ENCODE measurements at regions of chr19 and their contacts with region 1.

Region 1: DNA sequence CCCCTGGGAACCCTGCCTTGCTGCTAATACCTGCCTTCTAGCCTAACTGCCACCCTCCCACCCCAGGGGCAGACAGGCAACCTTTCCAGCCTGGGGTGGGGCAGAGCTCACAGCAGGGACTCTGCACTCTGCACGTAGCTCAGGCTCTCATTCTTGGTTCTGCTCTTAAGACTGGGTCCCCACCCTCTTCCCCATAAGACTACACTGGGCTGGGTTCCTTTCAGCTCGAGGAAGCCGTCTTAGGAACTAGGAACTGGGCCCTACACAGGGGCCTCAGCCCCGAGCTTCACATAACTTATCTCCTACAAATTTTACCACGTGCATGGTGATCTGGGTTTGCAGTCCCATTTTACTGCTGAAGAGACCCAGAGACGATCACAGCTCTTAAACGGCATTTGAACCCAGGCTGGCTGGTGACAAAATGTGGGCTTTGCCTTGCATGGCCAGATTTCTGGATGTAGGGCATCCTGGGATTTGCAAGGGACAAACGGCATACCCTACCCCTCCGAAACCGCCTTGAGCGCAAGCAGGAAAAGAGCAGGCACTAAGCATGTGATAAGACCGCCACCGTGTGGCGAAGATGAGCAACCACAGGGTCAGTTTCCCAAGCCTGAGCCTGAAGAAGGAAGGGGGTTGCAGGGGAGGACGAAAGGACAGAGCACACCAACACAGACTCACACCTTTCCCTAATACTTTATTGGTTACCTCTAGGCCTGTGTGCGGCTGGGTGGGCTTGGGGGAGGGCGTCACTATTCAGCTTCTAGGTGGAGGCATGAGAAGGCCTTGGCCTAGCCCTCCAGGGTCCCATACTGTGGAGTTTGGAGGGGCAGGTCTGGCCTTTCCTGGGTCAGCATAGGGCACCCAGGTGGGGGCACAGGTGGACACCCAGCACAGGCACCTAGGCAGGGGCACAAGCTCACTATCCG is 5.1 kb downstream of the JUNB start:
- DNase-seq: peak; percentile 69 to 76
- H3K4me3 ChIP-seq: peak overlapping the region; percentile 33; the same call in 1 of the 2 replicates
- H3K27ac ChIP-seq: peak overlapping the region; percentile 31
- H3K4me1 ChIP-seq: peaks cover 33% of the 10 kb centered on the region
- H3K27me3 ChIP-seq: no peaks in the 10 kb centered on the region
- CTCF ChIP-seq: peak; percentile 98

Region 2: GRCh38 chr19:12757544-12758274 is 38.7 kb before region 1 on chr19:
- CTCF ChIA-PET with region 1: interaction called, 9 read pairs
- POLR2A ChIA-PET with region 1: no interaction called
- intact Hi-C with region 1: loop called (anchors 1 kb)
- DNase-seq: peak; percentile 60 to 70
- H3K4me3 ChIP-seq: peak overlapping the region; percentile 37; the same call in 1 of the 2 replicates
- H3K27ac ChIP-seq: no peak overlapping the region
- H3K4me1 ChIP-seq: peaks cover 6% of the 10 kb centered on the region; the same call in 1 of the 2 replicates
- H3K27me3 ChIP-seq: peaks cover 6% of the 10 kb centered on the region; the same call in 1 of the 2 replicates
- CTCF ChIP-seq: peak; percentile 97

Region 3: DNA sequence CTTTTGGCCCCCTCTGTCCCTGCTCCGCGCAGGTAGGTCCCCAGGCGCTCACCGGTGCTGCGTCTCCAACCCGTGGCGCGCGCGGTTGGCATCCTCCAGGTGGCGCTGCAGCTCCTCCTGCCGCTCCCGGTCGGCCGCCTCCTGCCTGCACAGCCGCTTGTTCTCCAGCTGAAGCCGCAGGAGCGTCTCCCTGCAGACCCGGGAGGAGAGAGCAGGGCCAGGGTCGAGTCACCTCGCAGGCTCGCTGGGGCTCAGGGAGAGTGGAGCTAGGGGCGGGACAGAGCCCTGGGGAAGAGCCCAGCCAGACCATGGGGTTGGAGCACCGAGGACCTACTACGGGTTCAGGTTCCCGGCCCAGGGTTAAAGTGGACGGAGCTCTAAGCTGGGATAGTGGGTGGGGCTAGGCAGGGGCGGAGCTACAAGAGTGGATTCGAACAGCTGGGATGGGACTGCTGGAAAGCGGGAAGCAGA is 30.3 kb before region 1 on chr19:
- CTCF ChIA-PET with region 1: interaction called, 14 read pairs
- POLR2A ChIA-PET with region 1: interaction called, 38 read pairs
- intact Hi-C with region 1: loop called (anchors 2 kb)
- DNase-seq: peak; percentile 59 to 85
- H3K4me3 ChIP-seq: peak overlapping the region; percentile 25; the same call in 1 of the 2 replicates
- H3K27ac ChIP-seq: no peak overlapping the region
- H3K4me1 ChIP-seq: no peaks in the 10 kb centered on the region
- H3K27me3 ChIP-seq: no peaks in the 10 kb centered on the region
- CTCF ChIP-seq: peak; percentile 85

Region 4: GRCh38 chr19:12777217-12778016 is 19.0 kb before region 1 on chr19:
- CTCF ChIA-PET with region 1: interaction called, 20 read pairs
- POLR2A ChIA-PET with region 1: interaction called, 59 read pairs
- intact Hi-C with region 1: loop called (anchors 1 kb)
- DNase-seq: peak; percentile 63 to 85
- H3K4me3 ChIP-seq: peak overlapping the region; percentile 59
- H3K27ac ChIP-seq: peak overlapping the region; percentile 51
- H3K4me1 ChIP-seq: peaks cover 54% of the 10 kb centered on the region
- H3K27me3 ChIP-seq: no peaks in the 10 kb centered on the region
- CTCF ChIP-seq: peak; percentile 99

Region 5: GRCh38 chr19:12821761-12822160 is 25.4 kb after region 1 on chr19:
- CTCF ChIA-PET with region 1: interaction called, 16 read pairs
- POLR2A ChIA-PET with region 1: no interaction called
- intact Hi-C with region 1: no loop called
- DNase-seq: no peak
- H3K4me3 ChIP-seq: no peak overlapping the region
- H3K27ac ChIP-seq: no peak overlapping the region
- H3K4me1 ChIP-seq: no peaks in the 10 kb centered on the region
- H3K27me3 ChIP-seq: no peaks in the 10 kb centered on the region
- CTCF ChIP-seq: no peak

Region 6: GRCh38 chr19:12840091-12841079 is 44.0 kb after region 1 on chr19:
- CTCF ChIA-PET with region 1: interaction called, 7 read pairs
- POLR2A ChIA-PET with region 1: interaction called, 20 read pairs
- intact Hi-C with region 1: no loop called
- DNase-seq: peak; percentile 85 to 97
- H3K4me3 ChIP-seq: peak overlapping the region; percentile 49; the same call in 1 of the 2 replicates
- H3K27ac ChIP-seq: no peak overlapping the region
- H3K4me1 ChIP-seq: peaks cover 13% of the 10 kb centered on the region
- H3K27me3 ChIP-seq: no peaks in the 10 kb centered on the region
- CTCF ChIP-seq: no peak

Region 7: DNA sequence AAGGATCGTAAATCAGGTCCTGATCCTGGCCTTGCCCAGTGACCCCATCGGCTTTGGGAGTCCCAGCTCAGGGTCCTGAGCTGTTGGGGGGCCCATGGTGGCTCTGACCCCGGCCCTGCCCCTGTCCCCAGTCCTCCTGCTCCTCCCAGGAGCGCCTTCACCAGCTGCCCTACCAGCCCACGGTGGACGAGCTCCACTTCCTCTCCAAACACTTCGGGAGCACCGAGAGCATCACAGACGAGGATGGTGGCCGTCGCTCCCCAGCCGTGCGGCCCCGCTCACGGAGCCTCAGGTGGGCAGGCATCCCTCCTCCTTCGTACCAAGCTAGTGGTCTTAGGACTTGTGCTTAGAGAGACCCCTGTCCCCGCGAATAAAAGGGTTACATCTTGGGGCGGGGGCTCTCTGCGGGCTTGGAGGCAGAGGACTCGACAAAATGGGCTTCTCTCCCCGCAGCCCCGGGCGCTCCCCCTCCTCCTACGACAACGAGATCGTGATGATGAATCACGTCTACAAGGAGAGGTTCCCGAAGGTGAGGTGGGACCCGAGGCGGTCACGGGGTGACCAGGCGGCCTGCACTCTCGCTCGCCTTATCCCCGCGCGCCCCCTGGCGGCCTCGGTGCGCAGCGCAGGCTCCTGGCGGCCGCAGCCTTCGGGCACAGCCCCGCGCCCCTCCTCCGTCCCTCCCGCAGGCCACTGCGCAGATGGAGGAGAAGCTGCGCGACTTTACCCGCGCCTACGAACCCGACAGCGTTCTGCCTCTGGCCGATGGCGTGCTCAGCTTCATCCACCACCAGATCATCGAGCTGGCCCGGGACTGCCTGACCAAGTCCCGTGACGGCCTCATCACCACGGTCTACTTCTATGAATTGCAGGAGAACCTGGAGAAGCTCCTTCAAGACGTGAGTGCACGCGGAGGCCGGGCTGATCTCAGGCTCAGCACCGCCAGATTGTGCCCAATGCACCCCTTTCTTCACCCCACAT is 51.0 kb after region 1 on chr19:
- CTCF ChIA-PET with region 1: interaction called, 5 read pairs
- POLR2A ChIA-PET with region 1: interaction called, 8 read pairs
- intact Hi-C with region 1: loop called (anchors 2 kb)
- DNase-seq: peak; percentile 76 to 92
- H3K4me3 ChIP-seq: peak overlapping the region; percentile 49; the same call in 1 of the 2 replicates
- H3K27ac ChIP-seq: no peak overlapping the region
- H3K4me1 ChIP-seq: 0 out of 2 replicates have a peak, but pooled peaks cover 3% of the 10 kb centered on the region
- H3K27me3 ChIP-seq: no peaks in the 10 kb centered on the region
- CTCF ChIP-seq: peak; percentile 99

Region 8: DNA sequence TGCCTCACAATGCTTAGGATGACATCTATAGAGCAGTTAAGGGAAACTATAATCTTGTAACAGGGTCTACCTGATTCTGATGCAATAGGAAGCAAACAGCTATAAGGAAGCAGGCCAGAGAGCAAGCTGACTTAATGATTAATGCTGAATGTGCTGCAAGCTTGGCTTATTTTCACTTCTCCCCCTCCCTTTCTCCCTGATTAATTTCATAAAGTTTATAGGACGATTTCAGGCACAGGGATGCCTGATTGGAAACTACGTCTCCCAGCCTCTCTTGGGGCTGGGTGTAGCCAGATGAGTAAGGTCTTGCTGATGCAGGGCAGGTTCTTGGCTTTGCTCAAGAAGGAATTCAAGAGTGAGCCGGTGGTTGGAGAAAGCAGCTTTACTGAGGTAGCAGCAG is 885.1 kb after region 1 on chr19:
- CTCF ChIA-PET with region 1: no interaction called
- POLR2A ChIA-PET with region 1: no interaction called
- intact Hi-C with region 1: no loop called
- DNase-seq: peak in 1 of 2 experiments; percentile 35
- H3K4me3 ChIP-seq: no peak overlapping the region
- H3K27ac ChIP-seq: no peak overlapping the region
- H3K4me1 ChIP-seq: no peaks in the 10 kb centered on the region
- H3K27me3 ChIP-seq: peaks cover 67% of the 10 kb centered on the region
- CTCF ChIP-seq: no peak